B cell (primary cell): ENCODE measurements at regions of chr7 and their contacts with region 1.

Region 1: GRCh38 chr7:50418086-50418515 is 32.0 kb downstream of the FIGNL1 start:
- DNase-seq: peak; percentile 82
- ATAC-seq: peak; percentile 78
- H3K4me3 ChIP-seq: no peak overlapping the region
- H3K4me3 Mint-ChIP-seq: no peak overlapping the region
- H3K27ac ChIP-seq: no peak overlapping the region
- H3K27ac Mint-ChIP-seq: no peak overlapping the region
- H3K4me1 ChIP-seq: peaks cover 49 to 51% of the 10 kb centered on the region in 2 donors
- H3K4me1 Mint-ChIP-seq: peaks cover 54% of the 10 kb centered on the region
- H3K27me3 ChIP-seq: no peaks in the 10 kb centered on the region
- H3K27me3 Mint-ChIP-seq: no peaks in the 10 kb centered on the region
- CTCF ChIP-seq: peak; percentile 88

Region 2: DNA sequence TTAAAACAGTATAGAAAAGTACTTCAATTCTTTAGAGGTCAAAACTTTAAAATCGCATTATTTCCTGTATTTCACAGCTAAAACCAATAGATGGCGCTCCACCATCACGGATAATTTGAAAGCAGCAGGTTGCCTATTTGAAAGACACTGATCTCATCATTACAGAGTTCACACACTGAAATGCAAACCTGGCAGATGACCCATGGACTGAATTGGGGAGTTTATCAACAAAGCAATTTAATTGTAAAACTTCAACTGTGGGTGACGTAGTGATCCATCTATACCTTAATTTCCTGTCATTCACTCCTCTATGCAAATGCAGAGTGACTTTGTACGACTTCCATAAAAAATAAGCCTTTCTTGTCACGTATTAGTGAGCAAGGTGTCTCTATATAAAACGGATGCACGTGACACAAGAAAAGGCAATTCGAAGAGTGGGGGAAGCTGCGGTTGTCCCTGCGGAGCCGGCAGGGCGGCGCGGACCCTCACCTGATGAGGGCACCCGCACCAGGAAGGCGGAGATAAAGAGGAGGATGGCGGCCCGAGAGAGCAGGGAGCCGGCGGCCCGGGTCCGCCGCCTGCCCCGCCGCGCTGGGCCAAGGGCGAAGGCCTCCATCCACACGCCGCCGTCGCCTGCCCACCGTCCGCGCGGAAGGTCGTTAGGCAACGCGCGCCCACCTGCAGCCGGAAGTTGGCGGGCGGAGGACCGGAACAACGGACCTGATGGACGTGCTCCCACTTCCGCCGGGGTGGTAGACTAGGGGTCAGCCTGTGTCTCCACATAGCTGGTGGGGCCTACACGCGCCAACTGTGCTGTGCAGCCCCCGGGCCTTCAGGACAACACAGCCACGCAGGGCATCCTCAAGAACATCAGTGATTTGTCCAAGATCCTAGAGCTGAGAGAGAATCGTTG is 325.3 kb before region 1 on chr7 and contains the start of gene ZPBP:
- CTCF ChIA-PET with region 1: interaction called, 17 read pairs
- POLR2A ChIA-PET with region 1: no interaction called
- intact Hi-C with region 1: loop called (anchors 1 kb)
- DNase-seq: peak; percentile 83
- ATAC-seq: peak; percentile 80
- H3K4me3 ChIP-seq: peak within 1 kb of the TSS; percentile 46 to 82 (median 62)
- H3K4me3 Mint-ChIP-seq: peak within 1 kb of the TSS; percentile 94
- H3K27ac ChIP-seq: peak within 1 kb of the TSS; percentile 35 to 43
- H3K27ac Mint-ChIP-seq: peak within 1 kb of the TSS; percentile 72
- H3K4me1 ChIP-seq: peaks cover 4 to 5% of the 10 kb centered on the region in 2 donors
- H3K4me1 Mint-ChIP-seq: peaks cover 5% of the 10 kb centered on the region
- H3K27me3 ChIP-seq: no peaks in the 10 kb centered on the region
- H3K27me3 Mint-ChIP-seq: no peaks in the 10 kb centered on the region
- CTCF ChIP-seq: peak; percentile 97
- total RNA-seq, gene ZPBP: not detected in 2 replicates

Region 3: GRCh38 chr7:50147951-50148808 is 269.9 kb before region 1 on chr7:
- CTCF ChIA-PET with region 1: interaction called, 38 read pairs
- POLR2A ChIA-PET with region 1: no interaction called
- intact Hi-C with region 1: no loop called
- DNase-seq: peak; percentile 82
- ATAC-seq: peak; percentile 74
- H3K4me3 ChIP-seq: no peak overlapping the region
- H3K4me3 Mint-ChIP-seq: peak overlapping the region; percentile 77
- H3K27ac ChIP-seq: peak overlapping the region; percentile 77 to 89
- H3K27ac Mint-ChIP-seq: peak overlapping the region; percentile 91
- H3K4me1 ChIP-seq: peaks cover 74 to 87% of the 10 kb centered on the region in 2 donors
- H3K4me1 Mint-ChIP-seq: peaks cover 87% of the 10 kb centered on the region
- H3K27me3 ChIP-seq: no peaks in the 10 kb centered on the region
- H3K27me3 Mint-ChIP-seq: no peaks in the 10 kb centered on the region
- CTCF ChIP-seq: no peak

Region 4: DNA sequence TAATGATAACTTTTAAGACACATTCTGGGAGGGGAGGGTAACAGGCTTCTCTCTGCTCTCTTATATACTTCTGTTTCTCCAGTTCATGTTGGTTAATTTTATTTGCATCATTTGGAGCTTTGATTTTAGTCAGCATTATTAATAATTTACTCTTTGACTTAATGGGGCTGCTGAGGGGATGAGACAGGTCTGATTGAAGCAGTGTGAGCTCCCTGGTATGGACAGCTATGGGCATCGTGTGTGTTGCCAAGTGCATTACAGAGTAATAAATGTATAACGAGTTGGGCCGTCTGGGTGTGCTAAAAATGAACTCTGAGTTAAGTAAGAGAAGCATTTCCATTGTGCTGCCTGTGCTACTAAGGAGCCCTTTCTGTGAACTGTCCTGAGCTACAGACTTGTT is 145.3 kb before region 1 on chr7:
- CTCF ChIA-PET with region 1: interaction called, 12 read pairs
- POLR2A ChIA-PET with region 1: no interaction called
- intact Hi-C with region 1: no loop called
- DNase-seq: no peak
- ATAC-seq: no peak
- H3K4me3 ChIP-seq: no peak overlapping the region
- H3K4me3 Mint-ChIP-seq: no peak overlapping the region
- H3K27ac ChIP-seq: no peak overlapping the region
- H3K27ac Mint-ChIP-seq: peak overlapping the region; percentile 1
- H3K4me1 ChIP-seq: peaks cover 87 to 94% of the 10 kb centered on the region in 2 donors
- H3K4me1 Mint-ChIP-seq: peaks cover 86% of the 10 kb centered on the region
- H3K27me3 ChIP-seq: no peaks in the 10 kb centered on the region
- H3K27me3 Mint-ChIP-seq: no peaks in the 10 kb centered on the region
- CTCF ChIP-seq: no peak

Region 5: GRCh38 chr7:50335795-50336754 is 82.0 kb before region 1 on chr7:
- CTCF ChIA-PET with region 1: interaction called, 13 read pairs
- POLR2A ChIA-PET with region 1: no interaction called
- intact Hi-C with region 1: no loop called
- DNase-seq: peak; percentile 58
- ATAC-seq: peak; percentile 63
- H3K4me3 ChIP-seq: no peak overlapping the region
- H3K4me3 Mint-ChIP-seq: no peak overlapping the region
- H3K27ac ChIP-seq: peak overlapping the region; percentile 72 to 95
- H3K27ac Mint-ChIP-seq: no peak overlapping the region
- H3K4me1 ChIP-seq: peaks cover 100% of the 10 kb centered on the region in 2 donors
- H3K4me1 Mint-ChIP-seq: peaks cover 14% of the 10 kb centered on the region
- H3K27me3 ChIP-seq: no peaks in the 10 kb centered on the region
- H3K27me3 Mint-ChIP-seq: no peaks in the 10 kb centered on the region
- CTCF ChIP-seq: no peak

Region 6: GRCh38 chr7:50389961-50390360 is 28.1 kb before region 1 on chr7:
- CTCF ChIA-PET with region 1: interaction called, 16 read pairs
- POLR2A ChIA-PET with region 1: interaction called, 28 read pairs
- intact Hi-C with region 1: no loop called
- DNase-seq: no peak
- ATAC-seq: no peak
- H3K4me3 ChIP-seq: no peak overlapping the region
- H3K4me3 Mint-ChIP-seq: no peak overlapping the region
- H3K27ac ChIP-seq: peak overlapping the region; percentile 45 to 94
- H3K27ac Mint-ChIP-seq: peak overlapping the region; percentile 89
- H3K4me1 ChIP-seq: peaks cover 39 to 61% of the 10 kb centered on the region in 2 donors
- H3K4me1 Mint-ChIP-seq: peaks cover 61% of the 10 kb centered on the region
- H3K27me3 ChIP-seq: no peaks in the 10 kb centered on the region
- H3K27me3 Mint-ChIP-seq: no peaks in the 10 kb centered on the region
- CTCF ChIP-seq: no peak

Region 7: GRCh38 chr7:50449881-50450589 is 31.9 kb after region 1 on chr7 and contains the start of gene FIGNL1:
- CTCF ChIA-PET with region 1: no interaction called
- POLR2A ChIA-PET with region 1: no interaction called
- intact Hi-C with region 1: loop called (anchors 2 kb)
- DNase-seq: peak; percentile 90
- ATAC-seq: peak; percentile 98
- H3K4me3 ChIP-seq: peak within 1 kb of the TSS; percentile 9 to 88 (median 73)
- H3K4me3 Mint-ChIP-seq: peak within 1 kb of the TSS; percentile 94
- H3K27ac ChIP-seq: peak within 1 kb of the TSS; percentile 85 to 87
- H3K27ac Mint-ChIP-seq: peak within 1 kb of the TSS; percentile 94
- H3K4me1 ChIP-seq: peaks cover 17 to 19% of the 10 kb centered on the region in 2 donors
- H3K4me1 Mint-ChIP-seq: peaks cover 25% of the 10 kb centered on the region
- H3K27me3 ChIP-seq: no peaks in the 10 kb centered on the region
- H3K27me3 Mint-ChIP-seq: peaks cover 3% of the 10 kb centered on the region
- CTCF ChIP-seq: no peak
- total RNA-seq, gene FIGNL1: 23.3 and 24.5 TPM in 2 replicates